PC-9 (cell line): ENCODE measurements at regions of chr9 and their contacts with region 1.

Region 1: DNA sequence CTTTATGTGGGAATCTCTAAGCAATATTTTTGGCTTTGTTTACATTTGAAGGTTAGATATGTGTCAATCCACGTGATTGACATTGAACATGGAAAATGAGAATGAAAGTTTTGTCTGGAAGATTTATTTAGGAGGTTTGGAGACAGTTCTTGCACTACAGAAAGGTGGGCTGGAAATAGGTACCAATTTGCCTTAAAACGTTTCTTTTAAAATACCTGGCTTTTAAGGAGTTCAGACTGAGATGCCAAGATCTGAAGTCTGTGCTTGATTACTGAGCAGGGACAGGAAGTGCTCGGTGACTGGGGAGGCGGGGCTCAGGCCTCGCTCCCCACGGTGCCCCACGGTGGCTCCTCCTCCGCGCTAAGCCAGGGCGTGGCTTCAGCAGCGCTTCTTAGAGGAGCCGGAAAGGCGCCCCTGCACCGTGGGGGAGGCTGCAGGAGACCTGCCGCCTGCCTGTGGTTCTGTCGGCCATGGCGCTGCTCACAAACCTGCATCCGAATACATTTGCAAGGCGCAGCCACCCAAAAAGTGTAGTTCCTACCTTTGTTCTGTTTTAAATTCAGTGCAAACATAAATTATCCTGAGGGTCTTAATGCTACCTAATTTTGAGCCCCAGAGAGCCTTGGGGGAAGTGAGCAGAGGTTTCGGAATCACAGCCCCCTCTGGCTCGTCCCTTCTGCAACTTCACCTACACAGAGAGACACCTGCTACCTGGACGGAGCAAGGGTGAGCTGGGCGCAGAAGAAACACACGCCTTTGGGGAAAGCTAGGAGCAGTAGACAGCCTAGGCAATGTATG is 49.2 kb downstream of the USP20 start:
- DNase-seq: peak; percentile 78 to 92
- H3K4me3 ChIP-seq: peak overlapping the region; percentile 48; the same call in 1 of the 2 replicates
- H3K27ac ChIP-seq: no peak overlapping the region
- H3K4me1 ChIP-seq: peaks cover 36% of the 10 kb centered on the region
- H3K27me3 ChIP-seq: no peaks in the 10 kb centered on the region
- CTCF ChIP-seq: no peak

Region 2: GRCh38 chr9:129641746-129642513 is 242.5 kb before region 1 on chr9 and contains the start of gene ASB6:
- CTCF ChIA-PET with region 1: no interaction called
- POLR2A ChIA-PET with region 1: no interaction called
- intact Hi-C with region 1: loop called (anchors 2 kb)
- DNase-seq: peak; percentile 81 to 100
- H3K4me3 ChIP-seq: peak within 1 kb of the TSS; percentile 96
- H3K27ac ChIP-seq: no peak within 1 kb of the TSS
- H3K4me1 ChIP-seq: peaks cover 8% of the 10 kb centered on the region
- H3K27me3 ChIP-seq: no peaks in the 10 kb centered on the region
- CTCF ChIP-seq: peak; percentile 96
- total RNA-seq, gene ASB6: 19.3 and 20.2 TPM in 2 replicates

Region 3: GRCh38 chr9:129761901-129762364 is 122.5 kb before region 1 on chr9:
- CTCF ChIA-PET with region 1: no interaction called
- POLR2A ChIA-PET with region 1: no interaction called
- intact Hi-C with region 1: no loop called
- DNase-seq: peak; percentile 80 to 96
- H3K4me3 ChIP-seq: peak overlapping the region; percentile 23; the same call in 1 of the 2 replicates
- H3K27ac ChIP-seq: peak overlapping the region; percentile 97
- H3K4me1 ChIP-seq: peaks cover 60% of the 10 kb centered on the region
- H3K27me3 ChIP-seq: no peaks in the 10 kb centered on the region
- CTCF ChIP-seq: no peak

Region 4: DNA sequence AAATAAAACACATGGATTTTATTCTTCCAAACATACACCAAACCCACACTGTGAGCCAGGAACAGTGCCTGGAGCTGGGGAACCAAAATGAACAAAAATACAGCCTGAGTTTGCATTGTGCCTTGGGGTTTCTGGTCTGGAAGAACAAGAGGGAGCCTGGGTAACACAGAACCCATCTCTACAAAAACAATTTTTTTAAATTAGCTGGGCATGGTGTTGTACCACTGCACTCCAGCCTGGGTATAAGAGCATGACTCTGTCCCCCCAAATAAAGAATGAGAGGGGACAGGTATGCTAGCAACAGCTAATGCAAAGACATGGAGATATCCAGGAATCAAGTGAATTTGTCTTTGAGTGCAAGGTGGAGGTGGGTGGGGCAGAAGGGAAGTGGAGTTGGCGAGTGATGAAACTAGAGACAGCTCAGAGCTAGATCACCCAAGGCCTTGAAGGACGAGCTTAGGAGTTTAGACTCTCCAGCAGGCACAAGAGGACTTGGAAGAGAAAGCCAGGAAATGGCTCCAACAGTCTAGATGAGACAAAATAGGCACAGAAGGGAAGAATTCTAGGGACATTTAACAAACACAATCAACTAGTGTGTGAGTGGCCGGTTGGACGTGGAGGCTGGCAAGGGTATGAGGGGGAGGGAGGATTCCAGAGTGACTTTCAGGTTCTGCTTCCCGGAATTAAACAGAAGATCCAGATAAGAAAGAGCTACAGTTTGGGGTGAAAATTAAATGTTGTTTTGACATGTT is 111.2 kb after region 1 on chr9:
- CTCF ChIA-PET with region 1: interaction called, 14 read pairs
- POLR2A ChIA-PET with region 1: no interaction called
- intact Hi-C with region 1: loop called (anchors 5 kb)
- DNase-seq: peak in 1 of 2 experiments; percentile 21
- H3K4me3 ChIP-seq: no peak overlapping the region
- H3K27ac ChIP-seq: peak overlapping the region; percentile 30; the same call in 1 of the 2 replicates
- H3K4me1 ChIP-seq: peaks cover 34% of the 10 kb centered on the region
- H3K27me3 ChIP-seq: no peaks in the 10 kb centered on the region
- CTCF ChIP-seq: no peak

Region 5: DNA sequence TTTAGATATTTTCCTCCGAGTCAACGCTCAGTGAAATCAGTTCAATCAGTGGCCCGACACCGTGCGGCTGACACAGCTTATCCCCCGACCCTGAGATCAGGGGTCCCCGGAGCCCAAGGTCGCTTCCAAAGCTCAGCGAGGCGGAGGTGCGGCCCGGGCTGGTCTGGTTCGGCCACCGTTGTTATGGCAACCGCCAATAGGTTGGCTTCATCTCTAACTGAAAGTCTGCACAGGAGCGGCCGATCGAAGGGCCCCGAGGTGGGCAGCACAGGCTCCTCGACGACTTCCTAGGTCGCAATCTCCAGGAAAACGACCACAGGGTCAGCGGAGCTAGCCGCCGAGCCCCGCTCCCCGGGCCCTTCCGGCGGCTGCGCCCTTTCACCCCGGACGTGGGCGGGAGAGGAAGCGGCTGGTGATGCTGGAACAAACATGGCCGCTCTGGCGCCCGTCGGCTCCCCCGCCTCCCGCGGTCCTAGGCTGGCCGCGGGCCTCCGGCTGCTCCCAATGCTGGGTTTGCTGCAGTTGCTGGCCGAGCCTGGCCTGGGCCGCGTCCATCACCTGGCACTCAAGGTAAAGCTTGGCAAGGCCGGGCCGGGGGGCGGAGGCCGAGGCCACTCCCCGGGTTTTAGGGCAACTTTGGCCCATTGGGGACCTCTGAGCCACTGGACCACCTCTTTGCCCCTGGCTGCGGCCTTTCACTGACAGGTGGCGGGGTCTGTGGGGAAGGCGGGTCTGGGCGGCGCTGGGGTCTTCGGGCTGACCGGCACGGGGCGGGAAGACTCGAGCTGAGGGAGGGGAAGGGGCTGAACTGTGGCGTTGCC is 169.3 kb after region 1 on chr9 and contains the start of gene GPR107:
- CTCF ChIA-PET with region 1: interaction called, 4 read pairs
- POLR2A ChIA-PET with region 1: no interaction called
- intact Hi-C with region 1: loop called (anchors 1 kb)
- DNase-seq: peak; percentile 60 to 77
- H3K4me3 ChIP-seq: peak within 1 kb of the TSS; percentile 96
- H3K27ac ChIP-seq: peak within 1 kb of the TSS; percentile 53
- H3K4me1 ChIP-seq: peaks cover 28% of the 10 kb centered on the region
- H3K27me3 ChIP-seq: no peaks in the 10 kb centered on the region
- CTCF ChIP-seq: no peak
- total RNA-seq, gene GPR107: 66.4 and 77.4 TPM in 2 replicates

Region 6: GRCh38 chr9:130199605-130200004 is 315.2 kb after region 1 on chr9:
- CTCF ChIA-PET with region 1: interaction called, 11 read pairs
- POLR2A ChIA-PET with region 1: no interaction called
- intact Hi-C with region 1: no loop called
- DNase-seq: no peak
- H3K4me3 ChIP-seq: no peak overlapping the region
- H3K27ac ChIP-seq: no peak overlapping the region
- H3K4me1 ChIP-seq: no peaks in the 10 kb centered on the region
- H3K27me3 ChIP-seq: no peaks in the 10 kb centered on the region
- CTCF ChIP-seq: no peak

Region 7: GRCh38 chr9:130343445-130343918 is 459.1 kb after region 1 on chr9:
- CTCF ChIA-PET with region 1: no interaction called
- POLR2A ChIA-PET with region 1: no interaction called
- intact Hi-C with region 1: loop called (anchors 10 kb)
- DNase-seq: no peak
- H3K4me3 ChIP-seq: no peak overlapping the region
- H3K27ac ChIP-seq: no peak overlapping the region
- H3K4me1 ChIP-seq: no peaks in the 10 kb centered on the region
- H3K27me3 ChIP-seq: no peaks in the 10 kb centered on the region
- CTCF ChIP-seq: peak; percentile 85